ENCODE measurements at regions of chr11 and their contacts with region 1.

Region 1: GRCh38 chr11:130141561-130142331 is 17.8 kb upstream of the ST14 start:
- DNase-seq: no peak

Region 2: GRCh38 chr11:130181295-130182272 is 39.8 kb after region 1 on chr11:
- intact Hi-C with region 1: loop called (anchors 2 kb)
- DNase-seq: no peak

Measured in cardiac septum (tissue), 1 donor.